HEK293 (cell line): ENCODE measurements at regions of chr17 and their contacts with region 1.

Region 1: DNA sequence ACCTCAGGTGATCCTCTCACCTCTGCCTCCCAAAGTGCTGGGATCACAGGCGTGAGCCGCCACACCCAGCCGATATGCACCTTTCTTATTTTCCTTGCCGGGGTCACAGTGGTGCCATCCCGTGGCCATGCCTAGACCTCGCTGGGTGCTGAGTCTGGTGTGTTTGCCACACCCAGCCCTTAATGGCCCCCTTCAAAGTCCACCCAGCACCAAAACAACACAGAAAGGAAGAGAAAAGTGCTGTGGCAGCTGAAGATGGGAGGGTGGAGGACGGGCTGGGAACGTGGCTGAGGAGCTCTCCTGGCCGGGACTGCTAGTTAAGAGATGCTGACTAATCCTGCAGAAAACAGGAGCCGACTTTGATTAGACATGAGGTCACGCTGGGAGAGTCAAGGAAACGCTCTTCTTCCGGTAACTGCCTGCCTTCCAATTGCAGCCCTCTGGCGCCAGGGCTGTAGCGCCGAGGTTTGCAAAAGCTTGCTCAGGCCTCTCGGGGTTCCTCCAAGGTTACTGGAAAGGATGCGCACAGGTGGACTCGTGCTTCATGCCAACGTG is 10.9 kb downstream of the SLC43A2 start:
- H3K4me3 ChIP-seq: no peak overlapping the region
- H3K27ac ChIP-seq: no peak overlapping the region
- H3K4me1 ChIP-seq: peaks cover 6% of the 10 kb centered on the region; the same call in 1 of the 2 replicates
- CTCF ChIP-seq: peak; percentile 30; the same call in 1 of the 2 replicates

Region 2: DNA sequence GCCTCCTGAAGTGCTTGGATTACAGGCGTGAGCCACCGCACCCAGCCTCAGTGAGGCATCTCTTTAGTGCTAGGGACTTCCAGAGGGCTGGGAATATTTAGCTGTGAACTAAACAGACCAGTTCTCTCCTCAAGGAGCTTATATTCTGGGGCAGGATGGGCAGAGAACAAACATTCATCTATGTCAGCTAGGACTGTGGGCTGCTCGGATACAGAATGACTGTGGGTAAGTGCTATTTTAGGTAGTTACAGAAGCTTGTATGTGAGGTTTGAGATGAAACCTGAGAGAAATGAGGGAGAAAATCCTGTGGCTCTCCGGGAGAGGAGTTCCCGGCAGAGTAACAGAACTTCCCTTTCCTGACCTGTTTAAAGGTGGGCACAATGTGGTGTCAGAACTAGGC is 95.1 kb before region 1 on chr17:
- CTCF ChIA-PET with region 1: no interaction called
- POLR2A ChIA-PET with region 1: no interaction called
- H3K4me3 ChIP-seq: no peak overlapping the region
- H3K27ac ChIP-seq: no peak overlapping the region
- H3K4me1 ChIP-seq: no peaks in the 10 kb centered on the region
- CTCF ChIP-seq: no peak

Region 3: GRCh38 chr17:1628856-1629646 is 11.4 kb after region 1 on chr17:
- CTCF ChIA-PET with region 1: interaction called, 10 read pairs
- POLR2A ChIA-PET with region 1: interaction called, 11 read pairs
- H3K4me3 ChIP-seq: peak overlapping the region; percentile 66
- H3K27ac ChIP-seq: peak overlapping the region; percentile 84; the same call in 1 of the 2 replicates
- H3K4me1 ChIP-seq: no peaks in the 10 kb centered on the region; the same call in 1 of the 2 replicates
- CTCF ChIP-seq: no peak

Region 4: GRCh38 chr17:1639549-1640343 is 22.0 kb after region 1 on chr17:
- CTCF ChIA-PET with region 1: no interaction called
- POLR2A ChIA-PET with region 1: no interaction called
- H3K4me3 ChIP-seq: no peak overlapping the region
- H3K27ac ChIP-seq: no peak overlapping the region
- H3K4me1 ChIP-seq: 0 out of 2 replicates have a peak, but pooled peaks cover 2% of the 10 kb centered on the region
- CTCF ChIP-seq: no peak